CD8-positive, alpha-beta T cell (primary cell): ENCODE measurements at regions of chr16 and their contacts with region 1.

Region 1: GRCh38 chr16:2155091-2156021 is at the start of gene TRAF7:
- DNase-seq: peak; percentile 93 to 100 (median 96)
- ATAC-seq: peak; percentile 91
- H3K4me3 ChIP-seq: peak within 1 kb of the TSS; percentile 69 to 95
- H3K4me3 Mint-ChIP-seq: peak within 1 kb of the TSS; percentile 93
- H3K27ac ChIP-seq: peak within 1 kb of the TSS; percentile 79 to 82
- H3K27ac Mint-ChIP-seq: peak within 1 kb of the TSS; percentile 87
- H3K4me1 ChIP-seq: peaks cover 66% of the 10 kb centered on the region
- H3K4me1 Mint-ChIP-seq: peaks cover 60% of the 10 kb centered on the region
- H3K27me3 ChIP-seq: peaks cover 0 to 2% of the 10 kb centered on the region in 2 experiments
- H3K27me3 Mint-ChIP-seq: no peaks in the 10 kb centered on the region
- CTCF ChIP-seq: no peak
- total RNA-seq, gene TRAF7: 21.4 to 21.8 TPM

Region 2: DNA sequence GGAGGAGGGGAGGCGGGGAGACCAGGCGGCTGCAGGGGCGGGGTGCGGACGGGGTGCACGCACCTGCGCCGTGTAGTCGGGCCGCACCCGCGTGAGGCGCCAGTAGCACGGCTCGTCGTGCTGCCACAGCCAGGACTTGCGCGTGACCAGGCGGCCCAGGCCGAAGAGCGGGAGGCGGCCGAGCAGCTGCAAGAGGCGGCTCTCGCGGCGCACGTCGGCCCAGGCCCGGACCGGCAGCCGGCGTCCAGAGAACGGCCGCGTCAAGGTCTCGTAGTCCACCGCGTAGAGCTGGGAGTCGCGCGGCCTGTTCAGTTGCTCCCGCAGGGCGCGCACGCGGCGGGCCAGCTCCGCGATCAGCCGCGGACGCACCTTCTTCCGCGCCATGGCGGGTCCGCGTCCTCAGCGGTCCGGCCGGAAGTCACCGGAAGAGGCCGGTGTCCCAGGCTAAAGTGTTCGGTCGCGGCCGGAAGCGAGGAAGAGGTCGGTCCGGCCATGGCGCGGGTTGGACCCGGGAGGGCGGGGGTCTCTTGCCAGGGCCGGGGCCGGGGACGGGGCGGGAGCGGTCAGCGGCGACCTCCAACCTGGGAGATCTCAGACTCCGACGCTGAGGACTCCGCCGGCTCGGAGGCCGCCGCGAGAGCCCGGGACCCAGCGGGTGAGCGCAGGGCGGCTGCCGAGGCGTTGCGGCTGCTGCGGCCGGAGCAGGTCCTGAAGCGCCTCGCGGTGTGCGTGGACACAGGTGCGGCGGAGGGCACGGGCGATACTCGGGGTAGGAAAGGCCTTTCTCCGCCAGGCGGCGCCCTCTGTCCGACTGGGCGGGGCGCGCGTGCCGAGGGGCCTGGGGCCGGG is 382.4 kb before region 1 on chr16 and contains the starts of genes EME2 and MRPS34:
- CTCF ChIA-PET with region 1: no interaction called
- POLR2A ChIA-PET with region 1: no interaction called
- intact Hi-C with region 1: loop called in 1 of 2 experiments (anchors 2 kb)
- DNase-seq: peak; percentile 54 to 89 (median 78)
- ATAC-seq: peak; percentile 48
- H3K4me3 ChIP-seq: peak within 1 kb of the TSS; percentile 79 to 91
- H3K4me3 Mint-ChIP-seq: peak within 1 kb of the TSS; percentile 96
- H3K27ac ChIP-seq: peak within 1 kb of the TSS; percentile 57 to 66
- H3K27ac Mint-ChIP-seq: peak within 1 kb of the TSS; percentile 96
- H3K4me1 ChIP-seq: peaks cover 30% of the 10 kb centered on the region
- H3K4me1 Mint-ChIP-seq: peaks cover 19% of the 10 kb centered on the region
- H3K27me3 ChIP-seq: no peaks in the 10 kb centered on the region
- H3K27me3 Mint-ChIP-seq: no peaks in the 10 kb centered on the region
- CTCF ChIP-seq: peak; percentile 92
- total RNA-seq, gene EME2: 27.5 to 31.7 TPM
- total RNA-seq, gene MRPS34: 18.9 to 21.4 TPM

Region 3: DNA sequence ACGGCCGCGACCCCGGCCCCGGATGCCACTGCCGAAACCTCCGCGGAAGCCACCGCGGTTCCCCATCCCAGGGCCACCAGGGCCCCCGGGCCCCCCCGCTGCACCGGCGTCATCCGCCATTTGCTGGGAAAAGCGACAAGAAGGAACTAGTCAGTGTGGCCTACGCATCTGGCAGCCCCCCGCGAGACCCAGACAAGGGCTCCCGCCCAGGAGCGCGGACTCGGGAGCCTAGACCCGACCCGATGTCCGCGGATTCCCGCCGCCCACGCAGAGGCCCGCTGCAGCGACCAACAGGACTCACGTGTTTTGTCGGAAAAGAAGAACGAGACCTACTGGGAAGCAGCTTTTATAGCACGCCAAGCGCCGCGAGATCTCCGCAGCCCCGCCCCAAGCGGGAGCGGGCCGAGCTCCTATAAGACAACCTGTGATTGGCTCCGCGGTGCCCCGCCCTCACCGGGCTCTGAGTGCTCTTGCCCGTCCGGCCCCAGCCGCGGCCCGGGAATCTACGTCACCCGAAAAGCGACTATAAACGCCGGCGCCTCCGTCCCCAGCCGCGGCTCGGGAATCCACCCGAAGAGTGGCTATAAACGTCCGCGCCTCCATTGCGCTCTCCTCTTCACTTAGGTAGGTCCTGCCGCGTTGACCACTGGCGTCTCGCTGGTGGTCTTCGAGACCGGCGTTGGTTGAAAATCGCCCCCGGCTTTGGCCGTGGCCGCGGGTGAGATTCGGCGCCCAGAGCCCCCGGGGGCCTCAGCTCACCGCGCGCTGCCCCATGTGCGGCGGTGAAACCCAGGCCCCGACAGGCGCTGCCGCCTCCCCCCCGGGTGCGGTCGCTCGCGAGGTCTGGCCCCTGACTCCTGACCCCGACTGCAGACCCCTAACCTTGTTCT is 190.6 kb before region 1 on chr16 and contains the start of gene RPS2:
- CTCF ChIA-PET with region 1: interaction called, 3 read pairs
- POLR2A ChIA-PET with region 1: interaction called, 31 read pairs
- intact Hi-C with region 1: loop called in 1 of 2 experiments (anchors 2 kb)
- DNase-seq: peak; percentile 92 to 99 (median 98)
- ATAC-seq: peak; percentile 89
- H3K4me3 ChIP-seq: peak within 1 kb of the TSS; percentile 82 to 99
- H3K4me3 Mint-ChIP-seq: peak within 1 kb of the TSS; percentile 94
- H3K27ac ChIP-seq: peak within 1 kb of the TSS; percentile 98 to 99
- H3K27ac Mint-ChIP-seq: peak within 1 kb of the TSS; percentile 96
- H3K4me1 ChIP-seq: peaks cover 41% of the 10 kb centered on the region
- H3K4me1 Mint-ChIP-seq: peaks cover 45% of the 10 kb centered on the region
- H3K27me3 ChIP-seq: no peaks in the 10 kb centered on the region
- H3K27me3 Mint-ChIP-seq: no peaks in the 10 kb centered on the region
- CTCF ChIP-seq: no peak
- total RNA-seq, gene RPS2: 4,060 to 4,094 TPM

Region 4: DNA sequence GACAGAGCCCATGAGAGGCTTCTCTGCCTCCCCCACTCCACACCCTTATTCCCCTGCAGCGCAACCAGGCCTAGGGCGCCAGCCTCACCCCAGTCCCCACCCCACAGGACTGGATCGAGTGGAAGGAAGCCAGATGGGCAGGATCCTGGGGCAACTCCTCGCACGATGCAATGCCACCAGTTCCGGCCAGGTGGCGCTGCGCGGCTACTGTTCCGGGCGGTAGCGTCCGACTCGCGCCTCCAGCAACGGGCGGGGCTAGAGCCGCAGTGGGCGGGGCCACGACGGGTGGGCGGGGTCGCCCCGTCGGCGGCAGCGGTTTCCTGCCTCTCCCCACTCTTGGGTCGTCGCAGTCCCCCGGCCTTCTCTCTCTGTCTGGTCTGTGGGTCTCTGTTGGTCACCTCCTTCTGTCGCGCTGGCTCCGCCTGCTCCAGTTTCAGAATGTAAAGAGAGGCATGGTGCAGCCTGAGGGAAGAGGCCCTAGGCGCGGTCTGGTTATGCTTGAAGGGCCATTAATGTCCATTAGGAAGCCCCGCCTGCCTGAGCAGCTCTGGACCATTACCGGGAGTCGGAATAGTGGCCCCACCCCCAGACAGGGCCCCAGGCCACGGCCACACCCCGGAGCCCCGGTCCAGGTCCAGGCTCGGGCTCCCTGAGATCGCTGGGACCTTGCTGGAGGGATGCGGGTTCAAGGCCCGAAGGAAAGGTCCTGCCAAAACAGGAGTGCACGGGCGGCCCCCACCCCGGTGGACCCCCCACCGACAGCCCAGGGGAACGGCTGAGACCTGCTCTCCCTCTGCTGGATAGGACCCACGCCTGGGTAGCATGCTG is 132.0 kb before region 1 on chr16:
- CTCF ChIA-PET with region 1: interaction called, 53 read pairs
- POLR2A ChIA-PET with region 1: interaction called, 12 read pairs
- intact Hi-C with region 1: loop called (anchors 1 kb)
- DNase-seq: peak; percentile 88 to 100 (median 95)
- ATAC-seq: peak; percentile 95
- H3K4me3 ChIP-seq: peak overlapping the region; percentile 37 to 43
- H3K4me3 Mint-ChIP-seq: peak overlapping the region; percentile 69
- H3K27ac ChIP-seq: peak overlapping the region; percentile 24 to 70
- H3K27ac Mint-ChIP-seq: peak overlapping the region; percentile 70
- H3K4me1 ChIP-seq: peaks cover 32% of the 10 kb centered on the region
- H3K4me1 Mint-ChIP-seq: peaks cover 21% of the 10 kb centered on the region
- H3K27me3 ChIP-seq: peaks cover 0 to 22% of the 10 kb centered on the region in 2 experiments
- H3K27me3 Mint-ChIP-seq: peaks cover 17% of the 10 kb centered on the region
- CTCF ChIP-seq: peak; percentile 89

Region 5: GRCh38 chr16:2205104-2205966 is 50.0 kb after region 1 on chr16 and contains the start of gene MLST8:
- CTCF ChIA-PET with region 1: interaction called, 3 read pairs
- POLR2A ChIA-PET with region 1: interaction called, 17 read pairs
- intact Hi-C with region 1: loop called (anchors 1 kb)
- DNase-seq: peak; percentile 81 to 97 (median 92)
- ATAC-seq: peak; percentile 92
- H3K4me3 ChIP-seq: peak within 1 kb of the TSS; percentile 83 to 94
- H3K4me3 Mint-ChIP-seq: peak within 1 kb of the TSS; percentile 87
- H3K27ac ChIP-seq: peak within 1 kb of the TSS; percentile 83 to 97
- H3K27ac Mint-ChIP-seq: peak within 1 kb of the TSS; percentile 91
- H3K4me1 ChIP-seq: peaks cover 15% of the 10 kb centered on the region
- H3K4me1 Mint-ChIP-seq: peaks cover 19% of the 10 kb centered on the region
- H3K27me3 ChIP-seq: no peaks in the 10 kb centered on the region
- H3K27me3 Mint-ChIP-seq: peaks cover 1% of the 10 kb centered on the region
- CTCF ChIP-seq: no peak
- total RNA-seq, gene MLST8: 29.9 to 30.8 TPM

Region 6: DNA sequence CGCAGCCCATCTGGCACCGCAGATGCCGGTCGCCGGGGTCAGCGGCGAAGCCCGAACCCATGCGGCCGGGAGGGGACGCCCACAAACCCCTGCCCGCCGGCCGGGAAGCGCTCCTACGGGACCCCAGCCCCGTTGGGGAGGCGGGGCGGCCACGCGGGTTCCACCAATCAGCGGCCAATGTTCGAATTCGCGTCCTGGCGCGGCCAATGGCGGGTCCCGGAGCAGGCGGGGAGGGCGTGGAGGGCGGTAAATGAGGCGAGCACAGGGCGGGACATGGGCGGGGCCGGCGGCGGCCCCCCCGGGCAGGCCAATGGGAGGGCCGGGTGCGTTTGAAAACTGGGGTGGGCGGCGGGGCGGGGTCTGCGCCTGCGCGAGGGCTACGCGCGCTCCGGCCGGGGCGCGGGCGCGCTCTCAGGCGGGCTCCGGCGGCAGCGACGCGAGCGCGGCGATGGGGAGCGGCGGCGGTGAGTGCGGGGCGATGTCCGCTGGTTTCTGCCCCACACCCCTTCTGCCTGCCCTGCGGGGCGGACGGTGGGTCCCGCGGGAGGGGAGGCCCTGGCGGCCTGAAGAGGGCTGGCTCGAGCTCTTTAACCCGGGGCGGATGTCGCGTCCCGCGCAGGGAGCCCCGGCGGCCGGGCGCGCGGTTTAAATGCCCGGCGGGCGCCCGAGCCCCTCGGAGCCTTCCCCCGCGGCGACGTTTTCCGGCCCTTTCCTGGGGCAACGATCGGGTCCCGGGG is 273.8 kb after region 1 on chr16 and contains the start of gene CCNF:
- CTCF ChIA-PET with region 1: no interaction called
- POLR2A ChIA-PET with region 1: interaction called, 4 read pairs
- intact Hi-C with region 1: loop called in 1 of 2 experiments (anchors 1 kb)
- DNase-seq: peak; percentile 96 to 98 (median 98)
- ATAC-seq: peak; percentile 98
- H3K4me3 ChIP-seq: peak within 1 kb of the TSS; percentile 81 to 92
- H3K4me3 Mint-ChIP-seq: peak within 1 kb of the TSS; percentile 85
- H3K27ac ChIP-seq: peak within 1 kb of the TSS; percentile 35 to 43
- H3K27ac Mint-ChIP-seq: peak within 1 kb of the TSS; percentile 64
- H3K4me1 ChIP-seq: peaks cover 12% of the 10 kb centered on the region
- H3K4me1 Mint-ChIP-seq: peaks cover 14% of the 10 kb centered on the region
- H3K27me3 ChIP-seq: no peaks in the 10 kb centered on the region
- H3K27me3 Mint-ChIP-seq: no peaks in the 10 kb centered on the region
- CTCF ChIP-seq: no peak
- total RNA-seq, gene CCNF: 0.61 to 1.2 TPM